CD4-positive, alpha-beta memory T cell (primary cell): ENCODE measurements at regions of chr3 and their contacts with region 1.

Region 1: DNA sequence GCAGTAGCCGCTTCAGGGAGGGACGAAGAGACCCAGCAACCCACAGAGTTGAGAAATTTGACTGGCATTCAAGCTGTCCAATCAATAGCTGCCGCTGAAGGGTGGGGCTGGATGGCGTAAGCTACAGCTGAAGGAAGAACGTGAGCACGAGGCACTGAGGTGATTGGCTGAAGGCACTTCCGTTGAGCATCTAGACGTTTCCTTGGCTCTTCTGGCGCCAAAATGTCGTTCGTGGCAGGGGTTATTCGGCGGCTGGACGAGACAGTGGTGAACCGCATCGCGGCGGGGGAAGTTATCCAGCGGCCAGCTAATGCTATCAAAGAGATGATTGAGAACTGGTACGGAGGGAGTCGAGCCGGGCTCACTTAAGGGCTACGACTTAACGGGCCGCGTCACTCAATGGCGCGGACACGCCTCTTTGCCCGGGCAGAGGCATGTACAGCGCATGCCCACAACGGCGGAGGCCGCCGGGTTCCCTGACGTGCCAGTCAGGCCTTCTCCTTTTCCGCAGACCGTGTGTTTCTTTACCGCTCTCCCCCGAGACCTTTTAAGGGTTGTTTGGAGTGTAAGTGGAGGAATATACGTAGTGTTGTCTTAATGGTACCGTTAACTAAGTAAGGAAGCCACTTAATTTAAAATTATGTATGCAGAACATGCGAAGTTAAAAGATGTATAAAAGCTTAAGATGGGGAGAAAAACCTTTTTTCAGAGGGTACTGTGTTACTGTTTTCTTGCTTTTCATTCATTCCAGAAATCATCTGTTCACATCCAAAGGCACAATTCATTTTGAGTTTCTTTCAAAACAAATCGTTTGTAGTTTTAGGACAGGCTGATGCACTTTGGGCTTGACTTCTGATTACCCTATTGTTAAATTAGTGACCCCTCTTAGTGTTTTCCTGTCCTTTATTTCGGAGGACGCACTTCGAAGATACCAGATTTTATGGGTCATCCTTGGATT is at the start of gene MLH1:
- DNase-seq: peak in 4 of 5 donors; percentile 94 to 96 (median 96)
- H3K4me3 ChIP-seq: peak within 1 kb of the TSS; percentile 64 to 97
- H3K4me3 Mint-ChIP-seq: no peak within 1 kb of the TSS
- H3K27ac ChIP-seq: peak within 1 kb of the TSS; percentile 95
- H3K27ac Mint-ChIP-seq: no peak within 1 kb of the TSS
- H3K4me1 ChIP-seq: peaks cover 45% of the 10 kb centered on the region
- H3K4me1 Mint-ChIP-seq: peaks cover 25 to 38% (median 33%) of the 10 kb centered on the region in 4 donors
- H3K27me3 ChIP-seq: no peaks in the 10 kb centered on the region
- H3K27me3 Mint-ChIP-seq: no peaks in the 10 kb centered on the region
- total RNA-seq, gene MLH1: 30.3 to 33.8 TPM

Region 2: GRCh38 chr3:36876181-36876936 is 117.2 kb before region 1 on chr3:
- CTCF ChIA-PET with region 1: interaction called, 4 read pairs
- POLR2A ChIA-PET with region 1: interaction called, 22 read pairs
- intact Hi-C with region 1: no loop called
- DNase-seq: peak; percentile 66 to 81 (median 74)
- H3K4me3 ChIP-seq: peak overlapping the region; percentile 6 to 24
- H3K4me3 Mint-ChIP-seq: peak overlapping the region; percentile 63 to 85 (median 78)
- H3K27ac ChIP-seq: peak overlapping the region; percentile 71
- H3K27ac Mint-ChIP-seq: peak overlapping the region; percentile 83 to 97 (median 95)
- H3K4me1 ChIP-seq: peaks cover 48% of the 10 kb centered on the region
- H3K4me1 Mint-ChIP-seq: peaks cover 50 to 65% (median 54%) of the 10 kb centered on the region in 4 donors
- H3K27me3 ChIP-seq: no peaks in the 10 kb centered on the region
- H3K27me3 Mint-ChIP-seq: no peaks in the 10 kb centered on the region

Region 3: DNA sequence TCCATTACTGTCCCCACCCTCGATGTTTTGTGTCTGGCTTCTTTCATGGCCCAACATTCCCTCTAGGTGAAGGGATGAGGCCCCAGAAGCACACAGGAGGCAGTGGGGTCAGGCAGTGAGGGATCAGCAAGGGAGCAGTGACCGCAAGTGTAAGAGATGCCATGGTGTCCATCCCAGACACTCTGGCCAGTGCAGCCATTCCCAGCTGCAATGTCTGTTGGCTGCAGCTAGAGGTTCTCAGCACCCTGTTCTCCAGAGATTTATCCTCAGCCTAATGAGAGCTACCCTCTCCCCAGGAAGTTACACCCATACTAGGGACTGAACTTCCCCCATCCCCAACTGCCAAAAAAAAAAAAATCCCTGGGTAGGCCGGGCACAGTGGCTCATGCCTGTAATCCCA is 89.0 kb before region 1 on chr3:
- CTCF ChIA-PET with region 1: interaction called, 18 read pairs
- POLR2A ChIA-PET with region 1: interaction called, 28 read pairs
- intact Hi-C with region 1: no loop called
- DNase-seq: no peak
- H3K4me3 ChIP-seq: no peak overlapping the region
- H3K4me3 Mint-ChIP-seq: peak overlapping the region; percentile 33 to 78 (median 59)
- H3K27ac ChIP-seq: no peak overlapping the region
- H3K27ac Mint-ChIP-seq: peak overlapping the region in 6 of 7 donors; percentile 64 to 96 (median 76)
- H3K4me1 ChIP-seq: peaks cover 87% of the 10 kb centered on the region
- H3K4me1 Mint-ChIP-seq: peaks cover 57 to 88% (median 75%) of the 10 kb centered on the region in 4 donors
- H3K27me3 ChIP-seq: no peaks in the 10 kb centered on the region
- H3K27me3 Mint-ChIP-seq: no peaks in the 10 kb centered on the region

Region 4: GRCh38 chr3:36944012-36944640 is 49.5 kb before region 1 on chr3:
- CTCF ChIA-PET with region 1: interaction called, 4 read pairs
- POLR2A ChIA-PET with region 1: interaction called, 74 read pairs
- intact Hi-C with region 1: loop called (anchors 1 kb)
- DNase-seq: peak; percentile 25 to 57 (median 34)
- H3K4me3 ChIP-seq: peak overlapping the region; percentile 21 to 80
- H3K4me3 Mint-ChIP-seq: peak overlapping the region; percentile 82 to 90 (median 86)
- H3K27ac ChIP-seq: peak overlapping the region; percentile 67
- H3K27ac Mint-ChIP-seq: peak overlapping the region; percentile 61 to 87 (median 80)
- H3K4me1 ChIP-seq: peaks cover 13% of the 10 kb centered on the region
- H3K4me1 Mint-ChIP-seq: peaks cover 7 to 43% (median 26%) of the 10 kb centered on the region in 4 donors
- H3K27me3 ChIP-seq: no peaks in the 10 kb centered on the region
- H3K27me3 Mint-ChIP-seq: no peaks in the 10 kb centered on the region

Region 5: GRCh38 chr3:36981006-36981405 is 12.6 kb before region 1 on chr3:
- CTCF ChIA-PET with region 1: no interaction called
- POLR2A ChIA-PET with region 1: interaction called, 30 read pairs
- intact Hi-C with region 1: no loop called
- DNase-seq: no peak
- H3K4me3 ChIP-seq: no peak overlapping the region
- H3K4me3 Mint-ChIP-seq: no peak overlapping the region
- H3K27ac ChIP-seq: no peak overlapping the region
- H3K27ac Mint-ChIP-seq: no peak overlapping the region
- H3K4me1 ChIP-seq: no peaks in the 10 kb centered on the region
- H3K4me1 Mint-ChIP-seq: peaks cover 0 to 4% (median 3%) of the 10 kb centered on the region in 4 donors
- H3K27me3 ChIP-seq: no peaks in the 10 kb centered on the region
- H3K27me3 Mint-ChIP-seq: no peaks in the 10 kb centered on the region